ENCODE measurements at regions of chrX and their contacts with region 1.

Region 1: DNA sequence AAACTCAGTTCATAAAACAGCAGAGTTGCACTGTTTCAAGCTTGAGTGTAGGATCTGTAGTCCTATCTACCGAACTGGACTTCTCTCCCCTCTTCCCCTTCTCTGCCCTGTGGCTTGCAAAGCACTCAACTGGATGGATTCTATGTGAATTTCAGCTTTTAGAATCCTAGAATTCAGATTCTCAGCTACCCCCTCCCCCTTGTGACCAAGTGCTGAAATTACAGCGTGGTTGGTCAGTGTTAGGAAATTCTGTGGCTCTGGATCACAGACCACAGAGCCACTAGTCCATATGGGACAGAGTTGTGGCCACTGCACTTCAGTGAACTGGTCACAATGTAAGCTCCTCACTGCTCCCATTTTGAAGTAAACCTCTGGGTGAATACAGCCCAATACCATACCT is 64.6 kb upstream of the TRPC5 start:
- DNase-seq: peak; percentile 29
- ATAC-seq: peak; percentile 85
- H3K4me3 ChIP-seq: no peak overlapping the region
- H3K27ac ChIP-seq: no peak overlapping the region
- H3K4me1 ChIP-seq: no peaks in the 10 kb centered on the region
- H3K27me3 ChIP-seq: peaks cover 9% of the 10 kb centered on the region
- CTCF ChIP-seq: peak; percentile 54
- POLR2A ChIP-seq: no peak
- RAD21 ChIP-seq: peak; percentile 56

Region 2: GRCh38 chrX:111719426-111720210 is 427.6 kb before region 1 on chrX:
- CTCF ChIA-PET with region 1: no interaction called
- POLR2A ChIA-PET with region 1: no interaction called
- dilution Hi-C with region 1: no loop called
- in situ Hi-C with region 1: no loop called
- intact Hi-C with region 1: loop called (anchors 10 kb)
- DNase-seq: peak; percentile 16
- ATAC-seq: peak; percentile 35
- H3K4me3 ChIP-seq: no peak overlapping the region
- H3K27ac ChIP-seq: no peak overlapping the region
- H3K4me1 ChIP-seq: 0 out of 2 replicates have a peak, but pooled peaks cover 2% of the 10 kb centered on the region
- H3K27me3 ChIP-seq: no peaks in the 10 kb centered on the region
- CTCF ChIP-seq: peak; percentile 32
- POLR2A ChIP-seq: no peak
- RAD21 ChIP-seq: peak; percentile 34; the same call in 1 of the 2 replicates

Region 3: GRCh38 chrX:111869639-111870034 is 277.6 kb before region 1 on chrX:
- CTCF ChIA-PET with region 1: interaction called, 3 read pairs
- POLR2A ChIA-PET with region 1: interaction called, 9 read pairs
- dilution Hi-C with region 1: no loop called
- in situ Hi-C with region 1: no loop called
- intact Hi-C with region 1: loop called (anchors 1 kb)
- DNase-seq: peak; percentile 63
- ATAC-seq: peak; percentile 95
- H3K4me3 ChIP-seq: no peak overlapping the region
- H3K27ac ChIP-seq: no peak overlapping the region
- H3K4me1 ChIP-seq: no peaks in the 10 kb centered on the region
- H3K27me3 ChIP-seq: peaks cover 5% of the 10 kb centered on the region
- CTCF ChIP-seq: peak; percentile 71
- POLR2A ChIP-seq: no peak
- RAD21 ChIP-seq: peak; percentile 76

Region 4: DNA sequence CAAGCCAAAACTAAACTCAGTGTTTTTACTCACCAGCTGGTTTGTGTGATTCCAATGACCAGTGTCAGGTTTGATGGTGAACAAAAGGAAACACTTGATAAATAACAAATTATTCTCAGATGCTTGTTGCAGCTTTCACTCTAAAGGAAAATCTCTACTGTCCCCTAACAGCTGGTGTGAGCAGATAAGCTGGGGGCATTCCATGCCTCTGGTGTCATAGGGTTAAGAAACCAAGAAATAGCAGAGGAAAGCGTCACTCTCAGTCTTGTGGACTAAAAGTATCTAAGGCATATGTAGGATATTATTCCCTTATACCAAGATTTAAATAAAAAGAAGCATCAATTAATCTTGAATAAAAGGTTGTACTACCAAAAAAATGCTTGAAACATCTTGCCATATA is 89.0 kb before region 1 on chrX:
- CTCF ChIA-PET with region 1: no interaction called
- POLR2A ChIA-PET with region 1: no interaction called
- dilution Hi-C with region 1: no loop called
- in situ Hi-C with region 1: no loop called
- intact Hi-C with region 1: loop called (anchors 5 kb)
- DNase-seq: peak; percentile 81
- ATAC-seq: peak; percentile 91
- H3K4me3 ChIP-seq: no peak overlapping the region
- H3K27ac ChIP-seq: peak overlapping the region; percentile 71; the same call in 1 of the 2 replicates
- H3K4me1 ChIP-seq: peaks cover 3% of the 10 kb centered on the region; the same call in 1 of the 2 replicates
- H3K27me3 ChIP-seq: peaks cover 2% of the 10 kb centered on the region; the same call in 1 of the 2 replicates
- CTCF ChIP-seq: no peak
- POLR2A ChIP-seq: no peak
- RAD21 ChIP-seq: no peak

Region 5: GRCh38 chrX:112066813-112067212 is 80.4 kb before region 1 on chrX:
- CTCF ChIA-PET with region 1: interaction called, 10 read pairs
- POLR2A ChIA-PET with region 1: no interaction called
- dilution Hi-C with region 1: no loop called
- in situ Hi-C with region 1: no loop called
- intact Hi-C with region 1: no loop called
- DNase-seq: no peak
- ATAC-seq: no peak
- H3K4me3 ChIP-seq: no peak overlapping the region
- H3K27ac ChIP-seq: no peak overlapping the region
- H3K4me1 ChIP-seq: no peaks in the 10 kb centered on the region
- H3K27me3 ChIP-seq: peaks cover 6% of the 10 kb centered on the region
- CTCF ChIP-seq: no peak
- POLR2A ChIP-seq: no peak
- RAD21 ChIP-seq: no peak

Region 6: DNA sequence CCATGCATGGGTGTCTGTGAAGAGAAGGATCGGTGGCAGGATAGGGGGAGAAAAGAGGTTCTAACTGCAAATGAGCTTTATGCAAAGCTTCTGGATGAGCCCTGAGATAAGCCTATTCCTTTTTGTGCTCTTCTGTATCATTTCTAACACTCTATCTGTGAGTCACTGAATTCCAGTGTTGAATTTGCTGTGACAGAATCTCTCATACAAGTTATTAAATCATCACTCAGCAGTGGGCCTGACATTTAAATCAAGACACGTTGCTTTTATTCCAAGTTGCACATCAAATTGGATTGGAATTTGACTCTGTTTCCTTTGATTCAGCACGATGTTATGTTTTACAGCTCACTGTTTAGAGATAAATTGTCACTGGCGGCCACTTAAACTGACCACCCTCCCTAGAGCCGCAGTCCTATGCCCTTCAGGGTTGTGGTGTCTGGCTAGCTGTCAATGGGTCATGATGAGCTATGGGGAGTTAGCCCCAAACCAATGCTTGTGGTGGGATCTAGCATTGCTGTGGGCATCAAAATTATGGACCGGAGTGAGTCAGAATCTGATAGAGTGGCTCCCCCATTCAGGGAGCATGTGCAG is 489.8 kb after region 1 on chrX:
- CTCF ChIA-PET with region 1: no interaction called
- POLR2A ChIA-PET with region 1: no interaction called
- dilution Hi-C with region 1: no loop called
- in situ Hi-C with region 1: no loop called
- intact Hi-C with region 1: loop called (anchors 2 kb)
- DNase-seq: peak; percentile 87
- ATAC-seq: peak; percentile 79
- H3K4me3 ChIP-seq: no peak overlapping the region
- H3K27ac ChIP-seq: peak overlapping the region; percentile 96
- H3K4me1 ChIP-seq: peaks cover 8% of the 10 kb centered on the region; the same call in 1 of the 2 replicates
- H3K27me3 ChIP-seq: no peaks in the 10 kb centered on the region; the same call in 1 of the 2 replicates
- CTCF ChIP-seq: no peak
- POLR2A ChIP-seq: no peak
- RAD21 ChIP-seq: no peak

Region 7: DNA sequence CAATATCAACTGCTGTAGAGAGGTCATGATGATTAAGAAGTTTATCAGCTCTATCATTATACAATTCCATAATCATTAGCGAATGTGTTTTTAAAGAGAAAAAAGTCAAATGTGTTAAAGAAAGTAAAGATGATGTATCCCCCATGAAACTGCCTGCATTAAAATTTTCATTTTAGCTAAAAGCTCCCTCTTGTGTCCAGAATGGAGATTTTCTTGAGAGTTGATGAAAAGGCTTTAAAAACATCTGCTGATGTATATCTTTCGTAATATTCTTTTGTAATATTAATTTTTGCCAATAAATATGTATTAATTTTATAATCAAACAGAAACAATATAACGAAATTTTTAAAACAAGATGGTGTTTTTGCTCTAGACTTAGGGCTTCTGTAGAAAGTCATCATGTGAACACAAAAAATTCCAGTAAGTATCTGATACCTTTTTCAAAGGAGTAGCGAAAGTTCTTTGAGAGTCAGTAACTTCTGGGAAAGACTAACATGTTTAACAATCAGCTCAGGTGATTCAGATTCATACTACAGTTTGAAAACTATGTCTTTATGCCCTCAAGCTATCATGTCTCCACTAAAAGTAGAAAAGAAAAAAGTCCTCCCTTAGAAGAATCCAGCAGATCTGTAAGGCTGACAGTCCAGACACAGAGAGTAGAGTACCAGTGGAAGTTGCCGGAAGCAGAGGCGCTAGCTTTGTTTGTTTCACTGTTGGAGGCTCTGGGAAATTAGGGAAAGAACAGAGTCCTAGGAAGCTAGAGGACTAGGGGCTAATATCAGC is 584.8 kb after region 1 on chrX:
- CTCF ChIA-PET with region 1: no interaction called
- POLR2A ChIA-PET with region 1: no interaction called
- dilution Hi-C with region 1: no loop called
- in situ Hi-C with region 1: no loop called
- intact Hi-C with region 1: loop called (anchors 5 kb)
- DNase-seq: peak; percentile 32
- ATAC-seq: no peak
- H3K4me3 ChIP-seq: no peak overlapping the region
- H3K27ac ChIP-seq: no peak overlapping the region
- H3K4me1 ChIP-seq: no peaks in the 10 kb centered on the region
- H3K27me3 ChIP-seq: no peaks in the 10 kb centered on the region; the same call in none of the 2 replicates
- CTCF ChIP-seq: peak; percentile 49
- POLR2A ChIP-seq: no peak
- RAD21 ChIP-seq: peak; percentile 43